PC-9 (cell line): ENCODE measurements at regions of chr18 and their contacts with region 1.

Region 1: DNA sequence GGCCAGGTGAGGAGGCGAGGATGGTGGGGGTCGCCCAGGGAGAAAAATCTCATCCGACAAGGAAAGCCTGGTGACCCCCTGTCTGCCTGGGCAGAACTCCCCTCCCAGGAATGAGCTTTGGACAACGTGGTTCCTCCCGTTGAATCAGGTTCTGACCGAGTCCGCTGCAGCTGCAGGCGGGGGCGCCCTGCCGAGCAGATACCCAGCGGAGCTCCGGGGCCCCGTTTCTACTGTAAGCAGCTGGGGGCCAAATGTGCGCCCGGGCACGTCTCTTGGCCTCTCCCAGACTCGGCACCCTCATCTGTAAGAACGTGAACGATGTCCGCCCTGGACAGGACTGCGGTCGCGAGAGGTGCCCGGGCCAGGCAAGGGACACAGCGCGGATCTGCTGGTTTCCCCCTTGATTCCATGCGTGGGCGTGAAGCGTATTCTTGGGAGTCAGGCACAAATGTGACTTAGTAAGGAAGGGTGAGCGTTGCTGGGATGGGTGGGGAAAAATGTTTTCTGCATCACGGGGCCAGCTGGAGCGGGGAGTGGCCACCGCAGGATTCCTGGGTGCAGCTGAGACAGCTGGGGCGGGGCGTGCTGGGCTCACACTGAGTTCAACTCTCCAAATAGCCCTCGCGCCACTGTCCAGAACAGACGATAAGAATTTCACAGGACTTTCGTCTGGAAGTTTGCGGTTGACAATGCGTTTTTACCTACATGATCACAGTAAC is 20.2 kb upstream of the TUBB6 start:
- DNase-seq: peak; percentile 76 to 91
- H3K4me3 ChIP-seq: peak overlapping the region; percentile 56
- H3K27ac ChIP-seq: peak overlapping the region; percentile 33; the same call in 1 of the 2 replicates
- H3K4me1 ChIP-seq: peaks cover 6% of the 10 kb centered on the region; the same call in 1 of the 2 replicates
- H3K27me3 ChIP-seq: no peaks in the 10 kb centered on the region
- CTCF ChIP-seq: no peak

Region 2: DNA sequence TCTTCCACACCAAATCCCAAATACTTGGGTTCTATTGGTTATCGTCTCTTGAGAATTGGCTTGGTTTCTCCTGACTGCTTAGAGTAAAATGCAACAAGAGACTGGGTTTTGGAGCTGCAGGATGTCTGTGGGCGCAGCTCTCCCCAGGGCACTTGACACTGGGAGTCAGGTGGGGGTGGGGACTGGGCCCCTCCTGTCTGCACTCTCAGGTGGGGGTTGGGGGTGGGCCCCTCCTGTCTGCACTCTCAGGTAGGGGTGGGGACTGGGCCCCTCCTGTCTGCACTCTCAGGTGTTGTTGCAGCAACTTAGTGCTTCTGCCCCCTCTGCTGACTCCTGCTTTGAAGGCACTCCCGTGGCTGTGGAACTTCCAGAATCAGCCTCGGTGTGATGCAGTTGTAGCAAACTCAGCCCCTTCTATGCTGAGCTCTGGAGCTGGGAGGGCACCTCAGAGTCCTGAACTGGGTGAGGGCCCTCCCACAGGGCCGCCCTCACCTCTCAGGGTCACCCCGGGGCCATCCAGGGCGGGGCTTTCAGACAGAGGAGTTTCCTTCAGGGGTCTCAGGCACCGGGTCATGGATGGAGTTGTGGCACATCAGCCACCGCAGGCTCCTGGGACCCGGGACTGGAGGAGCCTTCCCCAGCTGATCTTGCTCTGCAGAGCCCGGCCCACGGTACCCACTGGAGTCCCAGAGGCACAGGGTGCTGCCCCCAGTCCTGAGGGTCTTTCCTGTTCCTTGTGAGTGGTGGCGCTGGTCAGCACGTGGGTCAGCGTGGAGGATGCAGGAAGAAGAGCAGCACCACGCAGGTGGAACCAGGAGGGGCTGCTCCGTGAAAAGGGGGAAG is 56.6 kb before region 1 on chr18:
- CTCF ChIA-PET with region 1: no interaction called
- POLR2A ChIA-PET with region 1: no interaction called
- intact Hi-C with region 1: no loop called
- DNase-seq: no peak
- H3K4me3 ChIP-seq: no peak overlapping the region
- H3K27ac ChIP-seq: no peak overlapping the region
- H3K4me1 ChIP-seq: no peaks in the 10 kb centered on the region
- H3K27me3 ChIP-seq: no peaks in the 10 kb centered on the region
- CTCF ChIP-seq: no peak

Region 3: DNA sequence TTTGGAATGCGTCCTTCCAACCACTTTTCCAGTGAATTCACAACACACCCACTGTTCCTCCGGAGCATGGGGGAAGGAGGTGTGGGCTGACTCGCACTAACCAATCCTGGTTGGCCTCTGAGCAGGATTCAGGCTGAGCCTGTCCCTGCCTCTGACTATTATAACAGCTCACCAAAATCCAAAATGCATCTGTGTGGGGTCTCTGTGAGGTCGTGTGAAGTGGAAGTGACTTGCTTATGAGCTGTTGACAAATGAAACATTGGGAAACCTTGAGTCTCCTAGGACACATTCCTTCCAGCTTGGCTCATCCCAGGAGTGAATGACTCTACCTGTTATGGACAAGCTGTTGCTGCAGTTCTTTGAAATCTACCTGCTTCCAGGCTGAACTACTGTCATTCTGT is 32.2 kb before region 1 on chr18:
- CTCF ChIA-PET with region 1: interaction called, 12 read pairs
- POLR2A ChIA-PET with region 1: no interaction called
- intact Hi-C with region 1: no loop called
- DNase-seq: peak; percentile 58 to 97
- H3K4me3 ChIP-seq: no peak overlapping the region; the same call in 1 of the 2 replicates
- H3K27ac ChIP-seq: peak overlapping the region; percentile 97
- H3K4me1 ChIP-seq: peaks cover 47% of the 10 kb centered on the region
- H3K27me3 ChIP-seq: no peaks in the 10 kb centered on the region
- CTCF ChIP-seq: no peak

Region 4: DNA sequence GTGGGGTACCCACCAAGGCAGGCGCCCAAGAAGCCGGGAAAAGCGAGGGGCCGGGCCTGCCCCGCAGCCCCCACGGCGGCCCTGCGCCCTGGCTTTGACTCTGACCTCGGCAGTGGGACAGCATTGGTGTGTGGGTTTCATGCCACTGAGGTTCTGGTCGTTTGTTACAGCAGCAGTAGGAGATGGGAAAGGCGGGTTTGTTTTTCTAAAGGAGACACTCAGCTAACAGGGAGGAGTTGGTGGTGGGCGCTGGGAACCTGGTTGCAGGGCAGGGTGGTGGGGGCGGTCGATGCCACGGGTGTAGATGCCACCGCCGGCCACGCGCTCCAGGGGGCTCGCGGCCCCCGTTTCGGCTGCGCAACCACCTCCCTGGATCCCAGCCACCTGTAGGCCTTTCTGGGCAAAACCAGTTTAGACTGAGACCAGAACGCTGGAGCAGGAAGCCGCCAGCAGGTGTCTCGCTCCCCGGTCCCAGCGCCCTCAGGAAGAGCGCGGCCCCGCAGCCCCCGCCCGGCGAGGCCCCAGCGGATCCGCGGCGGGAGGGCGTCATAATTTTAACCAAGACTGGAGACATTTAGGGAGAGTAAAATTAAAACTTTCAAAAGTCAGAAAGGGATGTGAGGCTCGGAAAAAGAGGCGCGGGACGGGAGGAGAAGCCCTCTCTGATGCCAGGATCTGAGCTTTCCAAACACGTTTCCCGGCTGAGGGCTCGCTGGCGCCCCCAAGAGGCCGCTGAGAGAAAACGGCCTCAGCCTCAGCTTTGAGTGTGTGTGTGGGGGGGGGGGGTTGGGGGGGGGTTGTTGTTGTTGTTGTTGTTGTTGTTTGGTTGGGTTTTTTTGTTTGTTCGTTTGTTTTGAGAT is 16.2 kb before region 1 on chr18:
- CTCF ChIA-PET with region 1: interaction called, 15 read pairs
- POLR2A ChIA-PET with region 1: no interaction called
- intact Hi-C with region 1: no loop called
- DNase-seq: peak; percentile 60 to 83
- H3K4me3 ChIP-seq: peak overlapping the region; percentile 70
- H3K27ac ChIP-seq: peak overlapping the region; percentile 57
- H3K4me1 ChIP-seq: no peaks in the 10 kb centered on the region
- H3K27me3 ChIP-seq: no peaks in the 10 kb centered on the region
- CTCF ChIP-seq: peak; percentile 80

Region 5: DNA sequence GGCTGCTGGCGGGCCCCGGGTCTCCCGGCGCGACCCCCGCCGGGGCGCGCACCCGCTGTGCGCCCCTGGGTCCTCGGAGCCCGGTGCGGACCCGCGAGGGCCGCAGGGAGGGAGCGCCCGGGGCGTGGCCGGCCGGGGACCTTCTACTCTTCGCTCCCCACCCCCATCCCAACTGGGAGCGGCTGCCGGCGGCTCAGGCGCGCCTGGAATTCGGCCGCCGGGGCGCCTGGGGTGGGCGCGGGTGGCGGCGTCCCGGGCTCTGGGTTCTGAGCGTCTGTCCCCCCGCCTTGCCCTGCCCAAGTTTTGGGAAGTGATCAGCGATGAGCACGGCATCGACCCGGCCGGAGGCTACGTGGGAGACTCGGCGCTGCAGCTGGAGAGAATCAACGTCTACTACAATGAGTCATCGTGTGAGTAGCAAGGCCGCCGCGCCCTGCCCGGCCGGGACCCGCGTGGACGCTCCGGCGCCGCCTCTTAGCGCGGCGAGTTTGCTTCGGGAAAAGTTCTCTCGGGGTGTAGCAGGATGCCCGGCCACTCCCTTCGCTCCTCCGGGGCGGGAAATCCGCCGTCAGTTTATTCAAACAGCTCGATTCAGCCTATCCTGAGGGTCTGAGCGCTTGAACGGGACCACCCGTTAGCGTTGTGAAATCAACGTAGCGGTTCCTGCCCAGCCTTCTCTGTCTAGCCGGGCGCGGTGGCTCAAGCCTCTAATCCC is 20.7 kb after region 1 on chr18:
- CTCF ChIA-PET with region 1: no interaction called
- POLR2A ChIA-PET with region 1: interaction called, 4 read pairs
- intact Hi-C with region 1: loop called (anchors 1 kb)
- DNase-seq: peak; percentile 37 to 75
- H3K4me3 ChIP-seq: peak overlapping the region; percentile 87
- H3K27ac ChIP-seq: no peak overlapping the region
- H3K4me1 ChIP-seq: 0 out of 2 replicates have a peak, but pooled peaks cover 6% of the 10 kb centered on the region
- H3K27me3 ChIP-seq: no peaks in the 10 kb centered on the region
- CTCF ChIP-seq: no peak

Region 6: GRCh38 chr18:12336875-12337274 is 49.0 kb after region 1 on chr18:
- CTCF ChIA-PET with region 1: no interaction called
- POLR2A ChIA-PET with region 1: interaction called, 10 read pairs
- intact Hi-C with region 1: loop called (anchors 2 kb)
- DNase-seq: peak; percentile 74 to 91
- H3K4me3 ChIP-seq: no peak overlapping the region; the same call in 1 of the 2 replicates
- H3K27ac ChIP-seq: peak overlapping the region; percentile 48
- H3K4me1 ChIP-seq: peaks cover 32% of the 10 kb centered on the region
- H3K27me3 ChIP-seq: no peaks in the 10 kb centered on the region
- CTCF ChIP-seq: no peak